Colonic mucosa (tissue), 4 donors: ENCODE measurements at regions of chr4 and their contacts with region 1.

Region 1: GRCh38 chr4:155787113-155787710 is 28.4 kb downstream of the GUCY1B1 start:
- DNase-seq: no peak
- H3K4me3 ChIP-seq: no peak overlapping the region
- H3K27ac ChIP-seq: no peak overlapping the region
- H3K4me1 ChIP-seq: no peaks in the 10 kb centered on the region
- H3K27me3 ChIP-seq: no peaks in the 10 kb centered on the region
- CTCF ChIP-seq: peak; percentile 40

Region 2: GRCh38 chr4:155442267-155443105 is 344.7 kb before region 1 on chr4:
- intact Hi-C with region 1: loop called (anchors 5 kb)
- DNase-seq: peak; percentile 79
- H3K4me3 ChIP-seq: no peak overlapping the region
- H3K27ac ChIP-seq: no peak overlapping the region
- H3K4me1 ChIP-seq: no peaks in the 10 kb centered on the region
- H3K27me3 ChIP-seq: no peaks in the 10 kb centered on the region
- CTCF ChIP-seq: peak; percentile 97

Region 3: DNA sequence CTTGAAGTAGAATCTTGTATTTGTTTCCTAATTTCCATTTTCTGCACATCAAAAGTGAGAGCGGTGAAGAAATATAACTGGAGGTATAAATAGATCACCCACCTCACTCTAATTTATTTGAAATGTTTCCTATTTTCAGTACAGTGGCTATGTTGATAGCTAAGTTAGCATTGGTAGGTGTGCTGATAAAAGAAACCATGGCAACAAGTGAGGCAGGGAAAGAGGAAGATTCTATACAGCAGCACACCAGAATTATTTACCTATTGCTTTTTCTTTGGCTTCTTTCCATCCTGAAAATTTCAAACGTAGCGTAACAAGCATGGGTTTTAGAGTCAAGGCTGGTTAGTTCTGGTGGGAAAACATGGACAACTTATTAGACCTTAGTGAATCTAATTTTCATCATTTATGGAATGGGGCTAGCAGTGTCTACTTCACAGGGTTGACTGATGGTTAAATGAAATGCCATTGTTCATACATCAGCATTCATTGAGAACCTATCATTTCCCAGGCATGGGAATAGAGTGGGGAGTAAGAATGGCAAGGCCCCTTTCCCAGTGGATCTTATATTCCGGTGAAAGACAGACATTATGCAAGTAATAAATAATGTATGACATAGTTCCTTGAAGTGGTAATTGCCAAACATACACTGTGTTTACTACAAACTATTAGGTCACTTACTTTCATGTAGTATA is 197.0 kb after region 1 on chr4:
- intact Hi-C with region 1: no loop called
- DNase-seq: no peak
- H3K4me3 ChIP-seq: no peak overlapping the region
- H3K27ac ChIP-seq: no peak overlapping the region
- H3K4me1 ChIP-seq: no peaks in the 10 kb centered on the region
- H3K27me3 ChIP-seq: no peaks in the 10 kb centered on the region
- CTCF ChIP-seq: no peak